ENCODE measurements at regions of chr4 and their contacts with region 1.

Region 1: DNA sequence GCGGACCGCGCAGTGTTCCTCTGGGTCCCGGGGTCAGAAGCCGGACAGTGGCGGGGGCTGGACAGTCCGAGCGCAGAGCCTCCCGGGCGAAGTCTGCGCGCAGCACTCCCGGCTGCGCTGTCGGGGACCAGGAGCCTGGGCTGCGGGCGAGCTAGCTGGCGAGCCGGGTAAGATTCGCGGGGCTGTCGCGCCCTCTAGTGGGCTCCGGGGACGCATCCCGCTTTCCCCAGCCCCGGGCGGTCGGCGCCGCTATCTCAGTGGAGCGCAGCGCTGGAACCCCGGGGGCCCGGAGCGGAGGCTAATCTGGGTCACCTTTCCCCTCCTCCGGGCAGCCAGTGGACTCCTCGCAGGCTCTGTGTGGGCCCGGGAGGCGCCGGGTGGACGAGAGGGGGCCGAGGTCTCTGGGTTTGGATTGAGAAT is 4.2 kb downstream of the PDGFRA start:
- DNase-seq: peak; percentile 91
- ATAC-seq: peak; percentile 88

Region 2: DNA sequence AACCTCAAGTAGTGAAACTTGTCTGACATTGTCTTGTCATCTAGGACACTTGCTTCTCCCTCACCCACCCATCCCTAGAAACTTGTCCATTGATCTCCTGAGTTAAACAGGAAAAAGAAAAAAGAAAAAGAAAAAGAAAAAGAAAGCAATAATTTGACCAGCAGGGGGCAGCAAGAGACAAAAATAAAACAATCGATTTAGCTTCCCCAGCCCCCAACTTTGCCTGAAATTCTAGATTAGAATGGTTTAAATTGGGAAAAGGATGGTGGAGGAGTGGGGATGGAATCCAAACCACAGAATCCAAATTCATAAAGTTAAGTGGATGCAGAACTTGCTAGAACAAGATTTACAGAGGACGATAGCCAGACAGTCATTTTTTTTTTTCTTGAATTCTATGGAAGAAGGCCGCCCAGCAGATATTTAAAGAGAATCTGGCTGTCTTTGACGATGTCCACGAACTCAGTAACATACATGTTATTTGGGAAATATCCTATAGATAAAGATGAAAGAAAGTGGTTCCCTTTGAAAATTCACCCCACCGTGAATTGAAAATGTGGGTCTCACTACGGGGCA is 1857.1 kb before region 1 on chr4:
- intact Hi-C with region 1: loop called (anchors 10 kb)
- DNase-seq: no peak
- ATAC-seq: no peak

Region 3: DNA sequence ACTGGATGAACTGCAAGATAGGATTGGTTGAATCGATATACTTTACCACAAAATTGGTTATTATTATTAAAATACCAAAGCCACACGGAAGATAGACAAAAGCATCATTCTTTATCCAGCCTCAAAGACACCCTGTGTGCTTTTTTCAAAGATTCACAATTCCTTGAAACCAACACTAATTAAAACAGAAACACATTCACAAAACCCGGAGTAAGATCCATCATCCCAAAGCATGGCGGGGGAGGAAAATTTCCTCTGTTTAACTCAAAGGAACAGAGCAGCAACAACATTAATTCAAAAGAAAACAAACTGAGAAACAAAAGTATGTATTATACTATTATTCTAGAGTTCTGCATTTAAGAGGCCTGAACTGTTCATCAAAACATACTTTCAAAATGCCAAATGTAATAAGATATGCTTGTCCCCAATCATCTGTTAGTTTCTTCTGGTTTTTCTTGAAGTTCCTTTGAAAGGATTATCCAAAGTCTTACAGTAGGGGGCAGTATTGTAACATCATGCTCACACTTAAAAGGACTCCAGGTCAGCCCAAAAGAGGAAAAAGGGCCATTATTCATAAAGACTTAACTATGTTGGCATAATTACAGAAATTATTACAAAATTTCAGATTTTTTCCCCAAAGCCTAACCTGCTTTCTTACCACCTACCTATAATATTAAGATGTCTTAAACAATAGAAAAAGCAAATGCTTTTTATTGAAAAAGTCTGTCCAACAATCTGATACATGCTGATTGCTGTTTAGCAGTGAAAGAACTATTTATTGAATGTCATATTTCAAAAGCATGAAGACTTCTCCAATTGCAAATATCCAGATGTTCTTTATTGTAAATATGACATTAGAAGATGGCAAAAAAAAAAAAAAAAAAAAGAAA is 1036.2 kb before region 1 on chr4:
- intact Hi-C with region 1: loop called (anchors 5 kb)
- DNase-seq: no peak
- ATAC-seq: peak; percentile 73

Region 4: DNA sequence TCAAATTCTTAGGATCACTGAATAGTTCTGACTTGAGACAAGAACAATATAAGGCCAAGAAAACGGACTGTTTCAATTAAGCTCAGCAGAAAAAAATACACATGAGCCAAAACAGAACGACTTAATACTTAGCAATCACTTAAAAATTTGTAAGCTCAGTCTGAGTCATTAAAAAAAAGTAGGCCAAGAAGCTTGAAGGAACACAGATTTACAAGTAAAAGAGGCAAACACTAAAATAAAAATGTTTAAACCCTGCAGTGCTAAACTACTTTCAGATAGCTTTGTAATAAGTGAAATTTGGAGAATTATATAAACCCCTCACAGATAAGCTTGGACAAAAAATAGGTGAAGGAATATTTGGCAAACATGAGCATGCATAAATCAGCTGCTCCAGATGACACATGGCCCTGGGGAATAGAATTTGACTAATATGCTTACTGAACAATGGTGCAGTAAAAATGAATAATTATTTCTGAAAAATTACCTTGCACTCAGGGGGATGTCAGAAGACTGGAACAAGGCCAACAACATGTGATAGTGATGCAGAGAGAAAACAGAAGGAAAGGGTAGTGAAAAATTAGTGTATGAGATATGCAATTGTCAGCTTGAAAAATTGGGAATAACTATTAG is 691.6 kb before region 1 on chr4:
- intact Hi-C with region 1: no loop called
- DNase-seq: no peak
- ATAC-seq: peak; percentile 90

Region 5: GRCh38 chr4:53908661-53909078 is 324.6 kb before region 1 on chr4:
- intact Hi-C with region 1: loop called (anchors 5 kb)
- DNase-seq: no peak
- ATAC-seq: peak; percentile 94